PC-9 (cell line): ENCODE measurements at regions of chr6 and their contacts with region 1.

Region 1: DNA sequence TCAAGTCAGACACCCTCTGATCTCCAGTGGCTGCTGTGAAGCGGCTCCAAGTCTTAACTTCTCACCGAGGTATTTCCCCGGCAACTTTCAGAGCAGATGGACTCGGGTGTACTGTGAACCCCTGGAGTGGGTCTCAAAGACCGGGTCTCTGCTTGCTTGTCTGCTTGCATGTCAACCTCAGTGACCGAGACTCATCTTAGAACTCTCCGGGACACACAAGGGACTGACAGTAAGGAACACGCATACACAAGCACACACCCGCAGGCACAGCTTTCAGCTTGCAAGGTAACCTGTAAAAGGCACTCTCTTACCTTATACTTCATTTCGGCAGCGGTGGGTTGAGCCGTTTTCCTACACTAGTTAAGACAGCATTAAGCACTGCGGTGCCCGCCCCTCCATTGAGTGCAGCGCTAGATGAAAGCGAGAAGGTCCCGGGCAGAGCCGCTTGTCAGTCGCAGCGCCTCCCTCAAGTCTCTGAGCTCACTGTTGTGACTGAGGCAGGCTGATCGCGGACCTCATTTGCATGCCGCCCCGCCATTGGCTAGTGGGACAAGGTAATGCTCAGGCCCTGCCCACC is at the start of gene NEDD9:
- DNase-seq: peak; percentile 90 to 96
- H3K4me3 ChIP-seq: peak within 1 kb of the TSS; percentile 81
- H3K27ac ChIP-seq: peak within 1 kb of the TSS; percentile 81
- H3K4me1 ChIP-seq: peaks cover 31% of the 10 kb centered on the region
- H3K27me3 ChIP-seq: no peaks in the 10 kb centered on the region
- CTCF ChIP-seq: no peak
- total RNA-seq, gene NEDD9: 35.8 and 57.5 TPM in 2 replicates

Region 2: GRCh38 chr6:11144393-11144851 is 87.9 kb before region 1 on chr6:
- CTCF ChIA-PET with region 1: no interaction called
- POLR2A ChIA-PET with region 1: interaction called, 4 read pairs
- intact Hi-C with region 1: loop called (anchors 2 kb)
- DNase-seq: peak; percentile 59 to 82
- H3K4me3 ChIP-seq: no peak overlapping the region
- H3K27ac ChIP-seq: no peak overlapping the region
- H3K4me1 ChIP-seq: no peaks in the 10 kb centered on the region
- H3K27me3 ChIP-seq: no peaks in the 10 kb centered on the region
- CTCF ChIP-seq: peak; percentile 84

Region 3: DNA sequence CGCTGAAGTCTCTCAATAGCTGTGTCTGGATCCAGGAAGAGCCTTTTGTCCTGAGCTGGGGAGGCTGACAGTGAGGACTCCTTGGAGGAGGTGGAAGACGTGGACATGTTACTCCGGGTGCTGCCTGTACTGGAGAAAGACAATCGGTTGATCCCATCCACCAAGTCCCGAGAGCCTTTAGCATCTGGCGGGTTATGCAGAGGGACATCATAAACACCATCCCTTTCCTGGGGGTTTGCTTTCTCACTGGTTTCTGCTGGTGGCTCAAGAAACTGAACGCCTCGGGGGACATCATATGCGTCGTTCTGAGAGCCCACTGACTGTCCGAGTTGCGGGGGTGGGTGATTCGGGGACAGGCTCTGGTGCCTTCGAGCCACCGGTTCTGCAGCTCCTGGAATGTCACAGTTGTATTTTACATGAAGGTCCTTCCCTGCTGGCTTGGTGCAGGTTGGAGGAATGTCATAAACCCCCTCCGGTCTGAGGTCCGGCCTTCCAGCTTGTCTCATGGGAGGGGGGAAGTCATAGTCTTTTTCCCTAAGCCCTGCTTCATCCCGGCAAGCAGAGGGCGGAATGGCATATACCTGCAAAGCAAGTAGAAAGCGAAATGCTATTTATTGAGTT is 41.5 kb before region 1 on chr6:
- CTCF ChIA-PET with region 1: no interaction called
- POLR2A ChIA-PET with region 1: no interaction called
- intact Hi-C with region 1: no loop called
- DNase-seq: no peak
- H3K4me3 ChIP-seq: no peak overlapping the region
- H3K27ac ChIP-seq: no peak overlapping the region
- H3K4me1 ChIP-seq: no peaks in the 10 kb centered on the region
- H3K27me3 ChIP-seq: no peaks in the 10 kb centered on the region
- CTCF ChIP-seq: no peak

Region 4: GRCh38 chr6:11218538-11219399 is 13.5 kb before region 1 on chr6:
- CTCF ChIA-PET with region 1: no interaction called
- POLR2A ChIA-PET with region 1: interaction called, 17 read pairs
- intact Hi-C with region 1: no loop called
- DNase-seq: no peak
- H3K4me3 ChIP-seq: no peak overlapping the region
- H3K27ac ChIP-seq: no peak overlapping the region
- H3K4me1 ChIP-seq: peaks cover 4% of the 10 kb centered on the region
- H3K27me3 ChIP-seq: no peaks in the 10 kb centered on the region
- CTCF ChIP-seq: no peak

Region 5: GRCh38 chr6:11270030-11271027 is 38.0 kb after region 1 on chr6:
- CTCF ChIA-PET with region 1: no interaction called
- POLR2A ChIA-PET with region 1: interaction called, 39 read pairs
- intact Hi-C with region 1: no loop called
- DNase-seq: no peak
- H3K4me3 ChIP-seq: no peak overlapping the region
- H3K27ac ChIP-seq: no peak overlapping the region
- H3K4me1 ChIP-seq: no peaks in the 10 kb centered on the region
- H3K27me3 ChIP-seq: no peaks in the 10 kb centered on the region
- CTCF ChIP-seq: no peak

Region 6: DNA sequence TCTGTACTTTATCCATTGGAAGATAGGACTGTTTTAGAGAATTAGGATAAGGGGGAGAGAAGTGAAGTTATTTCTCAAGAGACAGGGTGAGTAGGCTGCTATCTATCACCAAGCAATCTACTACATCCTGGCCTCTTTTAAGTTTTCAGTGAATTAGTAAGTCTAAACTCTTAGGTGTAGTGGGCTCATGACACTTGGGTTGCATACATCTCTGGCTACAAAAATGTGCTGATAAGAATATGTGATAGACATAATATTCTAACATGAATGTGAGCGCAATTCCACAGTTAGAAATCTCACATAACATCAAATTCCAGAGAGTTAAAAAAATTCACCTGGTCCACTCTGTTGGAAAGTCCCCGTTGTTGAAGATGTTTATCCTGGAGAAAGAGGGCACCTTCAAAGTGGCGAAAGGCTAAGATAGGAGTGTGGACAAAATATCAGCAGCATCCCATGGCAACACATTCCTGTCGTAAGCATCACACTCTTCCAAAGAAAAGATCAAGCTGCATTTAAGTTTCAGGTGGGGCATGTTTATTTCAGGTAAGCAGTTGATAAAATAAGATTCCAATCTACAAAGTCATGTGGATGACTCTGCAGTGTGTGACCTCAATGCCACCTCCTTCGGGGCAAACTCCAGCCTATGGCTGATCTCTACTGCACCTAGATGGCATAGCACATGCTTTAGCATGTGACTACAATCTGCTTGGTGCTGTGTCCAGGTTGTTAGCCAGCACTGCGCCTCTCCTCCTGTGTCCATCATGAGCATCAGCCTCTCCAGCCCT is 111.9 kb after region 1 on chr6:
- CTCF ChIA-PET with region 1: no interaction called
- POLR2A ChIA-PET with region 1: interaction called, 11 read pairs
- intact Hi-C with region 1: loop called (anchors 1 kb)
- DNase-seq: peak; percentile 85 to 98
- H3K4me3 ChIP-seq: no peak overlapping the region
- H3K27ac ChIP-seq: peak overlapping the region; percentile 82
- H3K4me1 ChIP-seq: peaks cover 45% of the 10 kb centered on the region
- H3K27me3 ChIP-seq: no peaks in the 10 kb centered on the region
- CTCF ChIP-seq: no peak

Region 7: GRCh38 chr6:11381801-11382513 is 149.7 kb after region 1 on chr6:
- CTCF ChIA-PET with region 1: no interaction called
- POLR2A ChIA-PET with region 1: no interaction called
- intact Hi-C with region 1: no loop called
- DNase-seq: no peak
- H3K4me3 ChIP-seq: no peak overlapping the region
- H3K27ac ChIP-seq: no peak overlapping the region
- H3K4me1 ChIP-seq: no peaks in the 10 kb centered on the region
- H3K27me3 ChIP-seq: no peaks in the 10 kb centered on the region
- CTCF ChIP-seq: no peak

Region 8: DNA sequence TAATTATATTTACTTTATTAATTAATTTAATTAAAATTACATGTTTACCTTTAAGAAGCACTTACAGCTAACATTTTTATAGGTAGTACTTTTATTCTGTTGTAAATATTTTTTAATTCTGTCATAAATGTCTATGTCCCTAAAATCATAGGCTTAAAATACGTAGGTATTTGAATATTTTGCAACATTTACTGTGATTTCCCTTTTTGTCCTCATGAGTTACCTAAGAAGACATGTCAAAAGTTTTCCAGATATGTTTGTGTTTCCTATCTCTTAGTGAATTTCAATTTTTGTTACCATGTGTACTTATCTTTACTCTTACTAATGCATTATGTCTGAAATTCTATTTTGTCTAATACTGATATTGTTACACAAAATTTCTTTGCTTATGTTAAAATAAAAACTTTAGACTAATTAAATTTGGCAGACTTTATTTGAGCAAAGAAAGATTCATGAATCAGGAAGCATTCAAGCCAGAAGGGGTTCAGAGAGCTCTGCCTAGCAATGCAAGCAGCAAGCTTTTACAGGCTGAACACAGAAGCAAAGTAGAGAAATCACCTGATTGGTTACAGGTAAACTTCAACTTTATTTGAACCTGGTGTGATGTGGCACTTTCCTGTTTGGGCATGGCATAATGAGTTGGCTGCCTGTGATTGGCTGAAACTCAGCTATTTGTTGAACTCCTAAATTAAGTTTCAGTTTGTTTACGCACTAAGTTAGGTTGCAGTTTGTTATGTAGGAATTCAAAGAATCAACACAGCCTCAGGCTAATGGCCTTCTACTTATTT is 182.1 kb after region 1 on chr6:
- CTCF ChIA-PET with region 1: no interaction called
- POLR2A ChIA-PET with region 1: interaction called, 16 read pairs
- intact Hi-C with region 1: loop called (anchors 5 kb)
- DNase-seq: peak; percentile 69 to 94
- H3K4me3 ChIP-seq: peak overlapping the region; percentile 19; the same call in 1 of the 2 replicates
- H3K27ac ChIP-seq: peak overlapping the region; percentile 95
- H3K4me1 ChIP-seq: peaks cover 46% of the 10 kb centered on the region
- H3K27me3 ChIP-seq: no peaks in the 10 kb centered on the region
- CTCF ChIP-seq: no peak